Activated CD4-positive, alpha-beta T cell treated with anti-CD3 and anti-CD28 coated beads for 36 hours (primary cell): ENCODE measurements at regions of chr17 and their contacts with region 1.

Region 1: DNA sequence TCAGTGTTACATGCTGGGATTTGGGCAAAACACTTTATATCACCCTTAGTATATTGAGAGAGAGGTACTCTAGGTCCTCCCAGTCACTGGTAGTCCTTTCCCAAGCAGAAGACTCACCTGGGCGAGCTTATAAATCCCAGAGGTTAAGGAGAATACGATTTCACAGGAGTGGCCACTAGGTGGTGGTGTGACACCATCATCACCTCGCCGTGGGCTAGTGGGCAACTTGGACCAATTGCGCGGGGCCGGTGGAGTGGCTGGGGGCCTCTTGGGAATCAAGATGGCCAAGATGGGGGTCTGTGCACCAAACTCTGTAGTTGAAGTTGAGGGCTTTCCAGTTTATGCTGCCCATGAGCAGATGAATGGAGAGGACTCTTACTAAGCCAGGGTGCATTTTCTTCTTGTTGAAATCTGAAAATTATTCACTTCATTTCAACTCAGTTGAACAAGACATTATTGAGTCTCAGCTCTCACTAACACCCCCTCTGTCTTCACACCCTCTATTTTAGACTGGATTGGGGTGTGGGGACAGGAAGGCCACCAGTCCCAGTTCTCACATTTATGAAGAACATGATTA is 38.2 kb upstream of the PIRT start:
- DNase-seq: peak; percentile 59
- ATAC-seq: no peak
- H3K4me3 Mint-ChIP-seq: no peak overlapping the region
- H3K27ac Mint-ChIP-seq: no peak overlapping the region
- H3K4me1 Mint-ChIP-seq: no peaks in the 10 kb centered on the region
- H3K27me3 Mint-ChIP-seq: peaks cover 20% of the 10 kb centered on the region

Region 2: DNA sequence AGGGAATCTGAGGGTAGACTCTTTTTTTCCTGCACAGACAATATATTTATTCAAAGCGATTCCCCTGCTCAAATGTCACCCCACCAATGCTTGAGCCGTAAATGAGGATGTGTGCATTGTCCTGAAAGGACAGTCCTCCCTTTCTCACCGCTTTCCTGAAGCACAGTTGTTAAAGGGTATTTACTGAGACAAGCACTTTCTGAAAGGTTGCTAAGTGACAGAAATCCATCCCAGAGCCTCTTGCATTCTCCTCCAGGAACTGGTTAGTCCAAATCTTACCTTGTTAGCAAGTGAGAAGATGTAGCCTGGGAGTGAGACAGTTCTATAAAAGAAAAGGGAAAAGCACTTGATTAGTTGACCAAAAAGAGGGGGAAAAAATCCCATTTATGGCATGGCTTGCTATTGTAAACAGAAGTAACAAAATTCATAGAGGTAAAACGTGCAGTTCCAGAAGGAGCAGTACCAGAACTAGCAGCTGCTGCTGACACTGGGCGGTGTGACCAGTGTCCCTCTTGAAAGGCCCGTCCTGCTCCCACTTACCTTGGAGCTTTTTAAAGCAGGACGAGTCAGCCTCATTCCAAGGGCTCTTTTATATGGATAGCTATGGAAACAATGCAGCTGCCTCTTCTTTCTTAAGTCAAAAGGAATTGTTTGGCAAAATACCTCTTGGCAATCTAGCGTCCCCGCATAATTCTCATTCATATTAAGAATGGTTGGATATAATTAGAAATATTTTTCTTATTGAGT is 326.8 kb before region 1 on chr17 and contains the start of gene MYH2:
- CTCF ChIA-PET with region 1: no interaction called
- POLR2A ChIA-PET with region 1: no interaction called
- intact Hi-C with region 1: no loop called
- DNase-seq: no peak
- ATAC-seq: no peak
- H3K4me3 Mint-ChIP-seq: no peak within 1 kb of the TSS
- H3K27ac Mint-ChIP-seq: no peak within 1 kb of the TSS
- H3K4me1 Mint-ChIP-seq: no peaks in the 10 kb centered on the region
- H3K27me3 Mint-ChIP-seq: peaks cover 14% of the 10 kb centered on the region
- total RNA-seq, gene MYH2: not detected

Region 3: DNA sequence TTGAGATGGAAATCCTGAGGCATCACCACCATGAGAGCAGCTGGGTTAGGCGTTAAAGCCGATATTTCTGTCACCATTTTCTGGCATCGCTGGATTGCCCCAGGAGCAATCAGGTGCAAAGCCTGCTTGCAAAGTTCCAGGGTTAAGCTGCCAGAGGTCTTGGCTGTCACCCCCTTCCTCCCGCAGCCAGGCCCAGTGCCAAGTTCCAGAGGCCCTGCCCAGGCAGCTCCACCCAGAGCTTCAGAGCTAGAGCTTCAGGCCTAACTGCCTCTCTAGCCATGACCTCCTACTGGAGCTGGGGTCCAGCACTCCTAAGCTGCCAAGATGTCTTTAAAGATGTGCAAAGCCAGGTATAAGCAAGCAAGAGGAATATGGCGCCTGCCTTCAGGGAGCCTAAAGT is 63.4 kb before region 1 on chr17:
- CTCF ChIA-PET with region 1: no interaction called
- POLR2A ChIA-PET with region 1: no interaction called
- intact Hi-C with region 1: no loop called
- DNase-seq: no peak
- ATAC-seq: no peak
- H3K4me3 Mint-ChIP-seq: no peak overlapping the region
- H3K27ac Mint-ChIP-seq: no peak overlapping the region
- H3K4me1 Mint-ChIP-seq: no peaks in the 10 kb centered on the region
- H3K27me3 Mint-ChIP-seq: peaks cover 2% of the 10 kb centered on the region

Region 4: GRCh38 chr17:11144358-11145233 is 268.5 kb after region 1 on chr17:
- CTCF ChIA-PET with region 1: interaction called, 8 read pairs
- POLR2A ChIA-PET with region 1: no interaction called
- intact Hi-C with region 1: loop called (anchors 1 to 2 kb)
- DNase-seq: peak; percentile 20
- ATAC-seq: no peak
- H3K4me3 Mint-ChIP-seq: no peak overlapping the region
- H3K27ac Mint-ChIP-seq: no peak overlapping the region
- H3K4me1 Mint-ChIP-seq: no peaks in the 10 kb centered on the region
- H3K27me3 Mint-ChIP-seq: peaks cover 2% of the 10 kb centered on the region

Region 5: GRCh38 chr17:11296994-11297393 is 420.9 kb after region 1 on chr17:
- CTCF ChIA-PET with region 1: interaction called, 8 read pairs
- POLR2A ChIA-PET with region 1: no interaction called
- intact Hi-C with region 1: loop called (anchors 2 to 5 kb)
- DNase-seq: no peak
- ATAC-seq: no peak
- H3K4me3 Mint-ChIP-seq: no peak overlapping the region
- H3K27ac Mint-ChIP-seq: no peak overlapping the region
- H3K4me1 Mint-ChIP-seq: no peaks in the 10 kb centered on the region
- H3K27me3 Mint-ChIP-seq: no peaks in the 10 kb centered on the region

Region 6: DNA sequence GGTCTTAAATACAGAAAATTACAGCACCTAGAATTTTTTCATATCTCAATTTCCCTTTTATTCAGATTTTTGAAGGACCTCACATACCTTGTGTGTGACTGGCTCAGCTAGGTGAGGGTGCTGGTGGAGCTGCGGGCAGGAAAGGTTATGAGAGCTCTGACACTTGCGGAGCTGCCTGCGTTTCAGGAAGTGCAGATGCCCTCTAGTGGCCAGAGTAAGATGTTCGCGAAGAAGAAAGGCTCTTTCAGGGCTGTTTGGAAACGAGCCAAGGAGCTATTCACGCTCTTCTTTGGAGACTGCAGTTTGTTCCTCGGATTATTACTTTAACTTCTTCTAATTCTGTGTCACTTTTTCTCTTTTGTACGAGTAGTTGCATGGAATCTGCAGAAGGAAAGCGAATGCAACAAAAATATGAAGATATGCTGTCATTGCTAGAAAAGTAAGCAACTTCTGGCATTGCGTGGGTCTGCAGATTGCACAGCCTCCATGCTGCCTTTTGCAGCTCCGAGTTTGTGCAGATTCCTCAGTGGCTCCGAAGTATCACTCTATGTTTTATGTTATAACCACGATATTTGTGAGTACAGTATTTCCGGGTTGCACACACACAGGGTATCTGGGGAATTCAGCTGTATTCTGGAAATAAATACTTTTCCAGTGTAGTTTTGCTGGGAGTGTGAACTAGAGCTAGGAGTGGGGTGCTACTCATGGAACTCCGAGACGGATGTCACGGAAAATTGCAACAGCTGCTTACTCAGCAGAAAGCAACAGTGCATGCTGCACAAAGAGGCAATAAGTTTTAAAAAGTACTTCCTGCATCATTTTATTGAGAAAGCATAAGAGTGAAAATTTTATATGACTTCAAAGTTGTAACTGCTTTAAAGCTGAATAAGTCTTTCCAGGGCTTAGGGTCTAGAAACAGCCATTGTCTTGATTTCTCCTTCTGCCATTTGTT is 768.5 kb after region 1 on chr17:
- CTCF ChIA-PET with region 1: interaction called, 19 read pairs
- POLR2A ChIA-PET with region 1: no interaction called
- intact Hi-C with region 1: loop called (anchors 1 to 2 kb)
- DNase-seq: peak; percentile 64
- ATAC-seq: peak; percentile 42
- H3K4me3 Mint-ChIP-seq: no peak overlapping the region
- H3K27ac Mint-ChIP-seq: no peak overlapping the region
- H3K4me1 Mint-ChIP-seq: no peaks in the 10 kb centered on the region
- H3K27me3 Mint-ChIP-seq: no peaks in the 10 kb centered on the region

Region 7: DNA sequence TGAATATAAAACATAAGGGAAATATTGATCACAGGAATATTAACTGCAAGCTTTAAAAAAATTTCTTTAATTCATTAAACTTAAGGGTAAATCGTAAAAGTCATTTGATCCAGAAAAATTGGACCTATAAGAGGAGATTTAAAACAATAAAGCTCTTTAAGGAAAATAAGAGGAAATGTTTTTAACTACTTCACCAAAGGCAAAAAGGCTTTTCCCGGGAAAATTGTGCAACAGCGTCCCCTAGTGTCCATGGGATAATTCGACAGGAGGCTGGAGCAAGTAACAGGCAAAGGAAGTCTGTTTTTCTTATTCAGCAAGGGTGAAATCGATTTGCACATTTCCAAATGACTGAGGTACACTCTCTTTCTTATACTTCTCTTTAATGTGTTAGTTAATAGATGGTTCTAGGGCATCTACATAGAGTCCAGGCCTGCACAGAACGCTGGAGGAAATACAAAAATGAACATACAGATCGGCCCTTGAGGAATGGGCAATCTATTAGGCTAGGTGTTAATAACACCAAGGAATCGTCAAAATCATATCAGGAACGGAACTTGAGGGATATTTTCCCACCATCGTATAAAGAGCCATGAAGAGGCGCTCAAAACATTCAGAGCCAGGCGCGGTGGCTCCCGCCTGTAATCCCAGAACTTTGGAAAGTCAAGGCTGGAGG is 1059.8 kb after region 1 on chr17:
- CTCF ChIA-PET with region 1: no interaction called
- POLR2A ChIA-PET with region 1: no interaction called
- intact Hi-C with region 1: loop called in 1 of 2 experiments (anchors 5 kb)
- DNase-seq: peak; percentile 57
- ATAC-seq: no peak
- H3K4me3 Mint-ChIP-seq: no peak overlapping the region
- H3K27ac Mint-ChIP-seq: no peak overlapping the region
- H3K4me1 Mint-ChIP-seq: no peaks in the 10 kb centered on the region
- H3K27me3 Mint-ChIP-seq: no peaks in the 10 kb centered on the region

Region 8: DNA sequence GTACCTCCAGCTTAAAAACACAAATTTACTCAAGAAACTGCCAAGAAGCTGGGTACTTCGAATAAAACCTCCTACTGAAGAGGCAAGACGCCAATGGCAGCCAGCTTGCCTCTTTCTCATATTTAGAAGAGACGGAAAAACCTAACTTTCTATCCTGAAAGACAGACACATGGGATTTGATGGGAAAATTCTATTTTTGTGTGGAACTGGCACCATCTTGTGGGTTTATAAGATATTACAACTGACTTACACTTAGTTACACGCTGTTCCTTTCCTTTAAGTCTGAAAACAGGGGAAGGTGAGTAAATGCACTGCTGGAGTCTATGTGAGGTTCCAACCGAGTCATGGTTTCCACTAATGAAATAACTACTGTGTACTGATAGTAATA is 1110.9 kb after region 1 on chr17:
- CTCF ChIA-PET with region 1: no interaction called
- POLR2A ChIA-PET with region 1: no interaction called
- intact Hi-C with region 1: loop called in 1 of 2 experiments (anchors 2 kb)
- DNase-seq: no peak
- ATAC-seq: peak; percentile 33
- H3K4me3 Mint-ChIP-seq: no peak overlapping the region
- H3K27ac Mint-ChIP-seq: no peak overlapping the region
- H3K4me1 Mint-ChIP-seq: peaks cover 7% of the 10 kb centered on the region
- H3K27me3 Mint-ChIP-seq: no peaks in the 10 kb centered on the region